ENCODE measurements at regions of chr3 and their contacts with region 1.

Region 1: DNA sequence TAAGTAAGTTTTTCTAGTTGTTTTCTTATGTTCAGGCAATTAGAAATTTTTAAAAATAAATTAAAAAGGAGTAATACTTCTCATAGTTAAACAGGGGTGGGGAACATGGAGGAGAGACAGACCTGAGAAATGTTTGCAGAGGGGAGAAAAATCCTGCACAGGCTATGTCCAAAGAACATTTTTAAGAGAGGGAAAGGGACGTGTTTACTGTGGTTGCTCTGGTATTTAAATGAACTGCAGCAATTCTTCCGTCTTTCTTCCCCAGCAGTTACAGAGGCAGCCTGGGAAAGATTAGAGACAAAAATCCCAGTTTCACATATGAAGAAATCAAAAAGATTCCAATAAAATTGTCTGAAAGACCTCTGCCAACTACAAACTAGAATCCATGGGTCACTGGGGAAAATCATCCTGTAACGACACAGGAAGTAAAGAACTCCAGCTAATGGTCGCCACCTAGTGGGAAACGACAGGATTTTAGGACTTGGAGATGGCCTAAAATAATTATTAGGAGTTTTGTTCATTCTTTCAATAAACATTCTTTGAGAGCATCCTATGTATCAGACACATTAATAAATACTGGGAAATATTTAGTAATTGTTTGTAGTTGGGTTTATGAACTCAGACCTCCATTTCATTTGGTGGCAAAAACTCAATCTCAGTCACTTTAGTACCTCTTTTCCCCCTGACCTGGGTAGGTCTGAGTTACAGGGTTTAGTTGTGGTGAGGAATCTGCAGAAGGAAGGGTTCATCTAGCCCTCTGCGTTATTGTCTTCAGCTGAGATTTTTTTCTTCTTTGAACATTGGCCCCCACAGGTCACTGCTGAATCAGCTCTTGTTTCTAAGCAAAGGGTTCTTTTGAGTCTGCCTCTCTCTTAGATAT is 69.9 kb upstream of the GOLIM4 start:
- DNase-seq: peak in 6 of 10 donors; percentile 23 to 67 (median 54)

Region 2: GRCh38 chr3:168040607-168041208 is 124.9 kb before region 1 on chr3:
- intact Hi-C with region 1: no loop called
- DNase-seq: peak in 2 of 10 donors; percentile 12 to 15

Region 3: DNA sequence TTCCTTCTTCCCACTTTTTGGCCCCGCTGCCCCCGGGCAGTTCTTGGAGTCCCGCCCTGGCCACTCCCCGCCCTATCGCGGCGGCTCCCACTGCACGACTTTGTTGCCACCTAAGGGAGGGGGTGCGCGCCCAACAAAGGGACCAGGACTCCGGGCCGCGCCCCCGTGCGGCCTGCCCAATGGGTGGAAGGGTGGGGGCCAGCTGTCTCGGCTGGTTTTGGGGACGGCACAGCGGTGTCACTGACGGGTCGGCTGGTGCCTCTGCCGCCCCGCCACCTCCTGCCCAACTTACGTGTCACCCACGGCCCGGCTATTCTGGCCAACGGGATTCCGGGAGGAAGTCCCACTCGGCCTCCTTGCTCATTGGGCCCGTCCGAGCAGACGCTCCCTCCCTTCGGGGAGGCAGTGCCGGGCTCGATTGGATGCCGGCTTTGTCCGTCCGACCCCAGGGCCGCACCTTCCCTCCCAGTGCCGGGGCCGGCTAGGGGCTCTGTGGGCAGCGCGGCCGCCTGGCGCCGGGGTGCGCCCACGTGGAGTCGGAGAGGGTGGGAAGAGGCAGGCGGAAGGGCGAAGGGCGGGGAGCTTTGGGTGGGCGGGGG is 69.9 kb before region 1 on chr3 and contains the start of gene GOLIM4:
- intact Hi-C with region 1: loop called (anchors 2 kb)
- DNase-seq: peak; percentile 88 to 99 (median 94)

Region 4: GRCh38 chr3:168134931-168135330 is 30.7 kb before region 1 on chr3:
- intact Hi-C with region 1: no loop called
- DNase-seq: no peak

Measured in posterior cingulate gyrus (tissue), 11 donors.